CD14-positive monocyte (primary cell): ENCODE measurements at regions of chr2 and their contacts with region 1.

Region 1: GRCh38 chr2:71071667-71072398 is 3.4 kb downstream of the NAGK start:
- DNase-seq: peak; percentile 96 to 99 (median 98)
- H3K4me3 ChIP-seq: peak overlapping the region; percentile 93 to 100 (median 97)
- H3K4me3 Mint-ChIP-seq: peak overlapping the region; percentile 89 to 93
- H3K27ac ChIP-seq: peak overlapping the region; percentile 95 to 97
- H3K27ac Mint-ChIP-seq: peak overlapping the region; percentile 96 to 100 (median 99)
- H3K4me1 ChIP-seq: peaks cover 92 to 94% of the 10 kb centered on the region in 2 donors
- H3K4me1 Mint-ChIP-seq: peaks cover 89% of the 10 kb centered on the region
- H3K27me3 ChIP-seq: no peaks in the 10 kb centered on the region
- H3K27me3 Mint-ChIP-seq: peaks cover 0 to 1% (median 0%) of the 10 kb centered on the region in 3 donors
- CTCF ChIP-seq: peak; percentile 43

Region 2: GRCh38 chr2:71130113-71130904 is 58.5 kb after region 1 on chr2 and contains the starts of genes MCEE and MPHOSPH10:
- intact Hi-C with region 1: loop called in 1 of 2 experiments (anchors 5 kb)
- DNase-seq: peak; percentile 75 to 84 (median 78)
- H3K4me3 ChIP-seq: peak within 1 kb of the TSS; percentile 87 to 99 (median 93)
- H3K4me3 Mint-ChIP-seq: no peak within 1 kb of the TSS
- H3K27ac ChIP-seq: peak within 1 kb of the TSS; percentile 82 to 94
- H3K27ac Mint-ChIP-seq: peak within 1 kb of the TSS in 2 of 7 donors; percentile 73 to 97
- H3K4me1 ChIP-seq: peaks cover 17 to 39% of the 10 kb centered on the region in 2 donors
- H3K4me1 Mint-ChIP-seq: peaks cover 11% of the 10 kb centered on the region
- H3K27me3 ChIP-seq: no peaks in the 10 kb centered on the region
- H3K27me3 Mint-ChIP-seq: no peaks in the 10 kb centered on the region
- CTCF ChIP-seq: no peak
- polyA plus RNA-seq, gene MCEE: 9.3 to 29.0 (median 24.7) TPM
- polyA plus RNA-seq, gene MPHOSPH10: 4.8 to 9.9 (median 5.6) TPM